Posterior vena cava (tissue), 2 donors: ENCODE measurements at regions of chr22 and their contacts with region 1.

Region 1: GRCh38 chr22:31630331-31631329 is 31.4 kb downstream of the PISD start:
- DNase-seq: peak; percentile 96

Region 2: DNA sequence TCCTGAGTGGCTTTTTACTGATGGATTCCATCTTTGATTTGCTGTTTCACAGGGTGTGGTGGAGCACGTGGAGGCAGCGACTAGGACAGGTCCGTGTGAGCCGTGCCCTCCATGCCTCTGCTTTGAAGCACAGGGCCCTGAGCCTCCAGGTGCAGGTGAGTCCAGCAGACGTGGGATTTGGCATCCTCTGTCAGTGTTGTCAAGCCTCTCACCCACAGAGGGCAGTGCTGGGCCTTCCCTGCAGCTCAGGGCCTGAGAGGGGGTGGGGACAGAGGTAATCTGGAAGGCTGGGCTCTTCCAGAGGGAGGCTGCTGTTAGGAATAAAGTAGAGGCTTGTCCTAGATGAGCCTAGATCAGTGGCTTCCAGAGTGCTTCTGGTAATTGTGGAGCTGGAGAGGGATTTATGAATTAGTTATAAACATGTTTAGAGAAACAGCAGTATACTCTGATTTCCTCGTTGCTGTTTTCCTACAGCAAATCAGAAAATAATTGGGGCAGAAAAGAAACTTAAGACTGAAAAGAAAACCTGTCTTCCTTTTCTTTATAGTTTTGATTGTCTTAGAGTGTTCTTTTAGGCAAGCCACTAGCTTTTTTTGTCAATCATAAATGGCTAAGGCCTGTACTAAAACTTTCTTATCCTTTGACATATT is 69.3 kb before region 1 on chr22:
- intact Hi-C with region 1: loop called (anchors 2 to 5 kb)
- DNase-seq: peak; percentile 87